ENCODE measurements at regions of chr18 and their contacts with region 1.

Region 1: DNA sequence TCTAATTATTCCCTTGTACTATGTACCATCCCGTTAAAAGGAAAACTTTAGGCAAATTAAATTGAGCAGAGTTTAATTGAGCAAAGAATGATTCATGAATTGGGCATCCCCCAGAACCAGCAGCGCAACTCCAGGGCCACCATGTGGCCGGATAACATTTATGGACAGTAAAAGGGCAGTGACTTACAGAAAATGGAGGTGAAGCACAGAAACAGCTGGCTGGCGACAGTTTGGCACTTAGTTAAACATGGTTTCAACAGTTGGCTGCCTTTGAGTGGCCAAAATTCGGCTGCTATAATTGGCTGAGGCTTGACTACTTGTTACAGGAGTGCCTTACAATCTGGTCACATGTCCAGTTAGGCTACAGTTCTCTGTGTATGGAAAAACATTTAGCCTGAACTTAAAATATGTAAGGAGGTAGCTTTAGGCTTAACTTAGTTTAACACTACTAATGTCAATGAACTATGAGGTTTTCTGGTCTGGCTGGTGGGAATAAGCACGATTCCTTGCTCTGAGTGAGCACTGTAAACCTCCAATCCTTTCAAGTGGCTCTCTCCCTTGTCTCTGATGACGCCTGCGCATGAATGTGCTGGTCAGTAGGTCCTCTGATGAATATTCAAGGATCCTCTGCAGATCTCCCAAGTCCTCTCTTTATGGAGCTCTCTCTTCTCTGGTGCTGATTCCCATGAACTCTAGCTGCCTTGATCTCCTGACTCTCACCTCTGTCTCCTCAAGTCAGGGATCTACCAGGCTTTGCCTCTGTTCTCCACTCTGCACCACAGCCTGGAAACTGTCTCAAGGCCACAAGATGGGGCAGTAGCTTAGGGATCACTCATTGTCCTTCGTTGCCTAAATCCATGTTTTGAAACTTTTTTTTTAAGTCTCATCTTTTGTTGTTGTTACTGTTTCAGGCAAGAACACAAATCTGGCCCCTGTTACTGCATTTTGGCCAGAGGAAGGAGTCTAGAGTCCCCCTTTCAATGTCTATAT is 24.4 kb upstream of the RAB31 start:
- DNase-seq: peak; percentile 89
- ATAC-seq: peak; percentile 92
- H3K4me3 ChIP-seq: peak overlapping the region; percentile 26
- H3K27ac ChIP-seq: peak overlapping the region; percentile 64
- H3K4me1 ChIP-seq: peaks cover 22% of the 10 kb centered on the region
- H3K27me3 ChIP-seq: no peaks in the 10 kb centered on the region
- CTCF ChIP-seq: peak; percentile 81

Region 2: GRCh38 chr18:8988261-8988871 is 695.3 kb before region 1 on chr18:
- CTCF ChIA-PET with region 1: no interaction called
- POLR2A ChIA-PET with region 1: no interaction called
- intact Hi-C with region 1: no loop called
- DNase-seq: peak; percentile 81
- ATAC-seq: peak; percentile 95
- H3K4me3 ChIP-seq: no peak overlapping the region
- H3K27ac ChIP-seq: no peak overlapping the region
- H3K4me1 ChIP-seq: no peaks in the 10 kb centered on the region
- H3K27me3 ChIP-seq: no peaks in the 10 kb centered on the region
- CTCF ChIP-seq: peak; percentile 94

Region 3: DNA sequence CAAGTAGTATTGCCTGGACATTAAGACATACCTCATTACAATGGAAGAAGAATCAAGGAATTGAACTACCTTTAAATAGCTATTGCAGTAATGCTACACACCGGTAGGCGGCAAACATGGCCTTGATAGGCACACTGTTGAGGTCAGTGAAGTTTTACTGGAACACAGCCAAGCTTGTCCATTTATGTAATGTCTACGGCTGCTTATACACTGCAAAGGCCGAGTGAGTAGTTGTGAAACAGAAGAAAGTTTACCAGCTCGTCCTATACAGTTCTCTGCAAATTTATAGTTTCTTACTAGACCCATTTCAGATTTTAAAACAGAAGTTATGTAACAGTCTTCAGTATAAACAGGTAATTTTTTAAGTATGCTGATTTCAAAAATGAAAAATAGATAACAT is 108.1 kb before region 1 on chr18:
- CTCF ChIA-PET with region 1: interaction called, 20 read pairs
- POLR2A ChIA-PET with region 1: no interaction called
- intact Hi-C with region 1: loop called (anchors 1 kb)
- DNase-seq: peak; percentile 95
- ATAC-seq: peak; percentile 98
- H3K4me3 ChIP-seq: no peak overlapping the region
- H3K27ac ChIP-seq: peak overlapping the region; percentile 2; the same call in 1 of the 2 replicates
- H3K4me1 ChIP-seq: peaks cover 5% of the 10 kb centered on the region; the same call in 1 of the 2 replicates
- H3K27me3 ChIP-seq: no peaks in the 10 kb centered on the region
- CTCF ChIP-seq: peak; percentile 95

Region 4: GRCh38 chr18:9705158-9705864 is 21.6 kb after region 1 on chr18:
- CTCF ChIA-PET with region 1: no interaction called
- POLR2A ChIA-PET with region 1: no interaction called
- intact Hi-C with region 1: no loop called
- DNase-seq: peak; percentile 68
- ATAC-seq: peak; percentile 89
- H3K4me3 ChIP-seq: no peak overlapping the region
- H3K27ac ChIP-seq: peak overlapping the region; percentile 42
- H3K4me1 ChIP-seq: peaks cover 19% of the 10 kb centered on the region
- H3K27me3 ChIP-seq: no peaks in the 10 kb centered on the region
- CTCF ChIP-seq: no peak

Region 5: DNA sequence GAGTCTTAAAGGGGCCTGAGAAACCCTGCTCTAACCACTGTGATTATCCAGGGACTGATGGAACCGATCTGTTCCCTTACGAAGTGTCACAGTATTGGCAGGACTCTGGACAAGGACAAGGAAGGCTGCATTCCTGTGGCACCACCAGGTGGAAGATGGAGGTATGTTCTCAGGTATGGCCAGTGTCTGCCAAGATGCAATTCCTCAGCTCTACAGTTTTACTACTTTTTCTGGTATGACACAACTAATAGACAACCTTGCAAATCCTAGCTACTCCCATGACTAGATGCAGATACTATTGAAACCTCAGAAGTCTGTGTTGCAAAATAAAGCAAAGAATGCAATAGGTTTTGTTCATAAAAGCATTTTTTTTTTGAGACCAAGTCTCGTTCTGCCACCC is 39.0 kb after region 1 on chr18:
- CTCF ChIA-PET with region 1: interaction called, 11 read pairs
- POLR2A ChIA-PET with region 1: no interaction called
- intact Hi-C with region 1: loop called (anchors 1 kb)
- DNase-seq: peak; percentile 83
- ATAC-seq: peak; percentile 60
- H3K4me3 ChIP-seq: no peak overlapping the region
- H3K27ac ChIP-seq: no peak overlapping the region
- H3K4me1 ChIP-seq: peaks cover 12% of the 10 kb centered on the region
- H3K27me3 ChIP-seq: no peaks in the 10 kb centered on the region
- CTCF ChIP-seq: peak; percentile 81

Region 6: GRCh38 chr18:9737472-9738121 is 53.9 kb after region 1 on chr18:
- CTCF ChIA-PET with region 1: interaction called, 13 read pairs
- POLR2A ChIA-PET with region 1: no interaction called
- intact Hi-C with region 1: no loop called
- DNase-seq: peak; percentile 85
- ATAC-seq: peak; percentile 58
- H3K4me3 ChIP-seq: peak overlapping the region; percentile 43
- H3K27ac ChIP-seq: peak overlapping the region; percentile 83
- H3K4me1 ChIP-seq: peaks cover 60% of the 10 kb centered on the region
- H3K27me3 ChIP-seq: no peaks in the 10 kb centered on the region
- CTCF ChIP-seq: no peak

Region 7: DNA sequence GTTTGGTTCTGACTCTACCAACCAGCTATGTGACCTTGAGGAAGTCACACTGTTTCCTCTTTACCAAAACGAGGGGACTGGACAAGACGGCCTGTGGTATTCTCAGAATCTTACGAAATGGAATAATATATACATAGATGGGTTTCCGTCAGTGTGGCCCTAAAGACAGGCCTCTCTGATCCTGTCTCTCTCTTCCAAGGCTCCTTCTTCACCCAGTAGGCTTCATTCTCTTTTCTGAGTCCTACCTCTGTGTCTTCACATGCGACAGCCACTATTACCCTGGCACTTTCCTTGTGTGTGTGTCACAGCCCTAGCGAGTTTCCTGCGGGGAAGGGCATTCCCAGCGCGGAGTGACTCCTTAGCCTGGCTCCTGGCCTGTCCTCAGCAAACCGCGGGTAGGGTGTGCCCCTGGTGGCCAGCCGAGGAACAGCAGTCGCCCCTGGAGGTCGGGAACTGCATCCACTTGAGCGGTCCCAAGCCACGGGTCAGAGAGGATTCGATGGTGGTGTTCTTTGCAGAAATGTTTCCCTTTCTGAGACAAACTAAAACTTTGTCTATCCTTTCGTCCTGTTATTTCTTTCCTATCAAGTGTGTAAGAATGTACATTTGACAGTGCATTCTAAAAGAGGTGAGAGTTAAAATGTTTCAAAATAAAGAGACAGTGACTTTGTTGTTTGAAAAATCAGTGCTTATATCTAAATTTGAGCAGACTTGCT is 87.7 kb after region 1 on chr18:
- CTCF ChIA-PET with region 1: no interaction called
- POLR2A ChIA-PET with region 1: no interaction called
- intact Hi-C with region 1: loop called (anchors 1 kb)
- DNase-seq: peak; percentile 76
- ATAC-seq: peak; percentile 96
- H3K4me3 ChIP-seq: no peak overlapping the region
- H3K27ac ChIP-seq: no peak overlapping the region
- H3K4me1 ChIP-seq: 0 out of 2 replicates have a peak, but pooled peaks cover 4% of the 10 kb centered on the region
- H3K27me3 ChIP-seq: no peaks in the 10 kb centered on the region
- CTCF ChIP-seq: peak; percentile 98

Region 8: GRCh38 chr18:9951022-9951859 is 267.5 kb after region 1 on chr18:
- CTCF ChIA-PET with region 1: no interaction called
- POLR2A ChIA-PET with region 1: no interaction called
- intact Hi-C with region 1: loop called (anchors 2 kb)
- DNase-seq: peak; percentile 61
- ATAC-seq: peak; percentile 72
- H3K4me3 ChIP-seq: no peak overlapping the region
- H3K27ac ChIP-seq: no peak overlapping the region
- H3K4me1 ChIP-seq: no peaks in the 10 kb centered on the region; the same call in 1 of the 2 replicates
- H3K27me3 ChIP-seq: no peaks in the 10 kb centered on the region
- CTCF ChIP-seq: peak; percentile 87

Region 9: DNA sequence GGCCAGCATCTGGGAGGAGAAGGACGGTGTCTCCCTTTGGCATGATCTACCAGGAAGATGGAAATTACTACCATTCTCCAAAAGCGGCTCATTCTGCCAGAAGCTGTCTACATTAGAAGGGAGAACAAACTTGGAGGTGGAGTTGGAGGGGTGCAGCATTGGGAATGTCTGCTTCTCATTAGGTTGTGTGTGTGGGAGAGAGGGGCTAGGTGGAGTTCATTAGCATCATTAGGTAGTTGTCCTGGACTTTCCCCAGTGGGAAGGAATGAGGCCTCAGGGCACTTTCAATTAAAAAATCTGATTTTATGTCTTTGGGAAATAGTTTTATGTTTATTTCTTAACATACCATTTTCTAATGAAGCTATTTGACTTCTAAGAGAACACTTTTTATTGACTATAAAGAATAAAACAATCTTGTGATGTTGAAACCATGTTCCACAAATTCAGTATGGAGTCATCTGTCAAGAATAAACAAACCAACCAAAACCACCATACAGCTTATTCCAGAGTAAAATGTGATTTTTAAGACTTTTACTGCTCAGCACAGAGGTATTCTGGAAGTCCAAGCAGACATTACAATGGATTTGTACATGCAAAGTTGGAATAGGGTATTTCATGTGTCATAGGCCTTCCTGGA is 290.7 kb after region 1 on chr18:
- CTCF ChIA-PET with region 1: no interaction called
- POLR2A ChIA-PET with region 1: no interaction called
- intact Hi-C with region 1: no loop called
- DNase-seq: no peak
- ATAC-seq: no peak
- H3K4me3 ChIP-seq: no peak overlapping the region
- H3K27ac ChIP-seq: no peak overlapping the region
- H3K4me1 ChIP-seq: no peaks in the 10 kb centered on the region
- H3K27me3 ChIP-seq: no peaks in the 10 kb centered on the region
- CTCF ChIP-seq: no peak

Measured in PC-3 (cell line).